ENCODE measurements at regions of chr20 and their contacts with region 1.

Region 1: DNA sequence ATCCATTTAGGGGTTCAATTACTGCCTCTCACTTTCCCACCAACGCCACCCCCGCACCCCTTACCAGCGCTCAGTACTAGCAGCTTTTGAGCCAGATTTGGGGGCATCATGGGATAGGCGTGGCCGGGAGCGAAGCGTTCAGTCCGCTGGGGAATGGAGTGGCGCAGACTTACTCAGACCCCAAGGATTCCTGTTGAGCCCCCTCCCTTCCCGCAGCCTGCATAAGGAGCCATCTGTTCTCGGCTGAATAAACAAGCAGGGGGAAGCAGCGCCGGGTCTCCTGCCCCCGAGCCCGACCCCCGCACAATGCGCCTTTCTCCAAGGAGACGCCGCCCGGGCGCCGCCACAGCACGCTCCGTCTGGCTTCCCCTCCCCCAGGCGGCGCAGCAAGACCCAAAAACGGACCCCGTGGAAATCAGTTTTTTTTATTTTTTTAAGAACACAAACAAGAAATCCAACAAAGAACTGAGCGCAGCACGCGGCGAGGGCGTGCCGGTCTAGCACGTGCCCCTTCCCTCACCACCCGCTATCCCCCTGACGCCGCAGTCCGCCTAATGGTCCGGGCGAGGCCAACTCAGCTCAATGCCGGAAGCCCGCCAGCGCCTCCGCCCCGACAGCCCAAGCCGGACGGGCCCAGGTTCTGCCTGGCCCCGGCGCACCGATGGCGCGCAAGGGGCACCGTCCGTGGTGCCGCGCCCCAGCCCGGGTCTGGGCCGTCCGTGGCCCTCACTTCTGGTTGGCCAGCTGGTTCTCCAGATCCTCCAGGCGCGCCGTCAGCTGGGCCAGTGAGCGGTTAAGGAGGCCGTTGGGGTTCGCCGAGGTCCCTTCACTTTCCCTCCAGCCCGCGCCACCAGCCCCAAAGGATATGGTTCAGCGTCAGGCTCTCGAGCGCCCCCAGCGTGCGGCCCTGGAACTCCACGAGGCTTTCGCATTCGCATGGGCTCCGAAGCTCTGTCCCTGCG is 13.3 kb upstream of the RBPJL start:
- DNase-seq: peak; percentile 82 to 95
- ATAC-seq: peak; percentile 78 to 91
- H3K4me3 ChIP-seq: peak overlapping the region; percentile 55
- H3K27ac ChIP-seq: peak overlapping the region; percentile 77 to 92
- H3K4me1 ChIP-seq: no peaks in the 10 kb centered on the region
- CTCF ChIP-seq: peak; percentile 76
- EP300 ChIP-seq: no peak
- POLR2A ChIP-seq: no peak
- RAD21 ChIP-seq: peak in 1 of 2 experiments; percentile 38; a peak in 2 of 5 replicates

Region 2: DNA sequence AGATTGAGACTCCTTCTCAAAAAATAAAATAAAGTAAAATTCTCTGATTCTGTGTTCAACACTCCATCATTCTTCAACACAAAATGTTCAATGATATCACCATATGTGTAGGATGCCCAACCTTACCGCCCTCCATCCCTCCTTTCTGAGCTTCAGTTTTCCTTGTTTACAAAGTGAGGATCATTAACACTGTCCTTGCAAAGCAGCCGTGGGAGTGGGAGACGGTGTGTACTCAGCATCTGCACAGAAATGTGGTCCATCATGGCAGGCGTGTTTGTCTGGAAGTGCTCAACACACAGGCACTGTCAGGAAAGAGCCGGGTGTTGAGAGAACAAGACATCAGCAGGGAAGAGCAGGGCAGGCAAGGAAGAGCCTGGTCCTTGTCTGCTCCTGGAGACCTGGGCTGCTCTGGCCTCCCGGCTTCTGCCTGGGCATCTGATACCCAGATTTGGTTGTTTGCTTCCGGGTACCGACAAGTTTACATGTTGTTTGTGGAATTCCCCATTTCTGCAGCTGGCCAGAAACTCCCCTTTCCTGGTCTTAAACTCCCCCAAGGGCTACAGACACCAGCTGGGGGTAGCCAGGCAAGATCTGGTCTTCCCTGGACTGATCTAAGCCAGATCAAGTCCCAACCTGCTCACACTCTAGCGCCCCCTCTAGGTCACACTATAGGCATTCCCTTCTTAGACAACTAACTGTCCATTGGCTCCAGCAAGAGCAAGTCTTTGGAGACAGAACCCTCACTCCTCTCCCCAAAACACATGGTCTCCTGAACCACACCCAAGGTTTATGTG is 844.4 kb before region 1 on chr20:
- CTCF ChIA-PET with region 1: no interaction called
- POLR2A ChIA-PET with region 1: no interaction called
- DNase-seq: peak in 1 of 2 experiments; percentile 61
- ATAC-seq: peak; percentile 44 to 67; a peak in 3 of 6 replicates
- H3K4me3 ChIP-seq: no peak overlapping the region
- H3K27ac ChIP-seq: no peak overlapping the region
- H3K4me1 ChIP-seq: no peaks in the 10 kb centered on the region
- CTCF ChIP-seq: peak; percentile 24; the same call in 1 of the 3 replicates
- EP300 ChIP-seq: no peak
- POLR2A ChIP-seq: no peak
- RAD21 ChIP-seq: no peak

Region 3: GRCh38 chr20:45011108-45011526 is 282.2 kb before region 1 on chr20:
- CTCF ChIA-PET with region 1: interaction called, 99 read pairs
- POLR2A ChIA-PET with region 1: no interaction called
- DNase-seq: peak; percentile 46 to 47
- ATAC-seq: peak; percentile 90 to 91
- H3K4me3 ChIP-seq: no peak overlapping the region
- H3K27ac ChIP-seq: no peak overlapping the region
- H3K4me1 ChIP-seq: peaks cover 12% of the 10 kb centered on the region
- CTCF ChIP-seq: peak; percentile 92
- EP300 ChIP-seq: no peak
- POLR2A ChIP-seq: no peak
- RAD21 ChIP-seq: peak; percentile 74 to 82

Region 4: DNA sequence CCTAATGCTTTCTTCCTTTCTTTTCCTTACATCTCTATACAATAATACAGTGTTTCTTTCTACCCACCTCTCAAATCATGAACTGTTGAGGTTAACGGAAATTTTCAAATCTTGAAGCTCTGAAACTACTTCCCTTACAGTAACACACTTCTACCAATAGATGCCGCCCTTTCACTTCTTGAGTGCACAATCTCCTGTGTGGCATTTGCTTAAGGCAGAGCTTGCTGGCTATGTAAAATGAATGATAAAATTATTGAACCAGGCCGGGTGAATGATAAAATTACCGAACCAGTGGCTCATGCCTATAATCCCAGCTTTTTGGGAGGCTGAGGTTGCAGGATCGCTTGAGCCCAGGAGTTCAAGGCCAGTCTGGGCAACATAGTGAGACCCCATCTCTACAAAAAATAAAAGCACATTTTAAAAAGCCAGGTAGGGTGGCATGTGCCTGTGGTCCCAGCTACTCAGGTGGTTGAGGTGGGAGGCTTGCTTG is 249.2 kb before region 1 on chr20:
- CTCF ChIA-PET with region 1: interaction called, 106 read pairs
- POLR2A ChIA-PET with region 1: no interaction called
- DNase-seq: peak; percentile 39 to 75
- ATAC-seq: peak; percentile 82 to 87
- H3K4me3 ChIP-seq: no peak overlapping the region
- H3K27ac ChIP-seq: no peak overlapping the region
- H3K4me1 ChIP-seq: peaks cover 24% of the 10 kb centered on the region
- CTCF ChIP-seq: peak; percentile 87
- EP300 ChIP-seq: no peak
- POLR2A ChIP-seq: no peak
- RAD21 ChIP-seq: peak; percentile 82 to 86

Region 5: GRCh38 chr20:45095753-45096371 is 197.5 kb before region 1 on chr20:
- CTCF ChIA-PET with region 1: interaction called, 103 read pairs
- POLR2A ChIA-PET with region 1: interaction called, 3 read pairs
- DNase-seq: peak; percentile 55 to 61
- ATAC-seq: peak; percentile 58 to 81; a peak in 5 of 6 replicates
- H3K4me3 ChIP-seq: no peak overlapping the region
- H3K27ac ChIP-seq: no peak overlapping the region
- H3K4me1 ChIP-seq: no peaks in the 10 kb centered on the region
- CTCF ChIP-seq: peak; percentile 90
- EP300 ChIP-seq: no peak
- POLR2A ChIP-seq: no peak
- RAD21 ChIP-seq: peak; percentile 74 to 83

Region 6: DNA sequence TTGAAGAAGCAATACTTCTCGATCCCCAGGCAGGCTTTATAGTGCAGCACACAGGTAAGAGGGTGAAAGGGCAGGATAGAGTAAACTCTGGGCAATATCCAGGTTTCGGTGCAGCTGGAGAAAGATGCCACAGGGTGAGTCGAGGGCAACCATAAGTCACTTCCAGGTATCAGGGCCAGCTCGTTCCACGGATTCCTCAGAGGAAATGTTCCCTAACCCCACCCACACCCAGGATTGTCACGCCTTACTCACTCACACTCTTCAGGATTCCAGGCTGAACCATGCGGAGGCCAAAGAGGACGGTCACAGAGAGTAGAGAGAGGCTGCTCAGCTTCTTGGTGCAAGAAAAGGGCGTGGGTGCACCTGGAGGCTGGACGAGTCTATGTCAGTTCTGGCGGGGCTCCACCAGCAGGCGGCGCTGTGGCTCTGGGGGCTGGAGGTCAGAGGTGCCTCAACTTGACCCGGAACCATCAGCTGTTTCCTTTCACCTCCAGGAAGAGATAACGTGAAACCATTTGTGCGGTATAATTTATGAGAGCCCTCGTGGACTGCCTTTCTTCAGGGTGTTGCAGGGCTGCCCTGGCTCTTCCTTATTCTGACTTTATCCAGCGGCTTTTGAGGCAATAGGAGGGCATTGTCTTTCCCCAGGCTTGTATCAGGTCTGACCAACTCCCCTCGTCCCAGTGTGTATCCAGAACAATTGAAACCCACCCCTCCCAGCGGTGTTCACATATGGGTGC is 154.6 kb before region 1 on chr20:
- CTCF ChIA-PET with region 1: interaction called, 30 read pairs
- POLR2A ChIA-PET with region 1: no interaction called
- DNase-seq: peak; percentile 31 to 59
- ATAC-seq: peak; percentile 70 to 84; a peak in 5 of 6 replicates
- H3K4me3 ChIP-seq: no peak overlapping the region
- H3K27ac ChIP-seq: no peak overlapping the region
- H3K4me1 ChIP-seq: no peaks in the 10 kb centered on the region
- CTCF ChIP-seq: peak; percentile 29; the same call in 2 of the 3 replicates
- EP300 ChIP-seq: no peak
- POLR2A ChIP-seq: no peak
- RAD21 ChIP-seq: peak; percentile 37 to 48; a peak in 3 of 5 replicates

Region 7: GRCh38 chr20:45268531-45268930 is 24.8 kb before region 1 on chr20:
- CTCF ChIA-PET with region 1: interaction called, 37 read pairs
- POLR2A ChIA-PET with region 1: no interaction called
- DNase-seq: no peak
- ATAC-seq: no peak
- H3K4me3 ChIP-seq: no peak overlapping the region
- H3K27ac ChIP-seq: no peak overlapping the region
- H3K4me1 ChIP-seq: no peaks in the 10 kb centered on the region
- CTCF ChIP-seq: no peak
- EP300 ChIP-seq: no peak
- POLR2A ChIP-seq: no peak
- RAD21 ChIP-seq: no peak

Region 8: DNA sequence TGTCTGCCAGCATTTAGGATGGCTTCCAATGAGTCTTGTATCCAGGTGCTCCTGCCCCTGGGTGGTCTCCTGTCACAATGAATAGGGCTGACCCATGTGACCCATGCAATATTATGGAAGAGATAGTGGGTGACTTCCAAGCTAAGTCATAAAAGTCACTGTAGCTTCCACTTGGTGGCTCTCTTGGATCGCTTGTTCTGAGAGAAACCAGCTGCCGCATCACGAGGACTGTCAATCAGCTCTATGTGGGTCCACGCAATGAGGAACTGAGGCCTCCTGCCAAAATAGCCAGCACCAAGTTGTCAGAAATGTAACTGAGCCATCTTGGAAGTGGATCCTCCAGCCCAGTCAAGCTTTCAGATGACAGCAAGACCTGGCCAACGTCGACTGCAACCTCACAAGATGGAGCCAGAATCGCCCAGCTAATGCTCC is 29.6 kb after region 1 on chr20:
- CTCF ChIA-PET with region 1: interaction called, 19 read pairs
- POLR2A ChIA-PET with region 1: no interaction called
- DNase-seq: peak in 1 of 2 experiments; percentile 63
- ATAC-seq: peak; percentile 61 to 71
- H3K4me3 ChIP-seq: no peak overlapping the region
- H3K27ac ChIP-seq: no peak overlapping the region
- H3K4me1 ChIP-seq: no peaks in the 10 kb centered on the region; the same call in 2 of the 3 replicates
- CTCF ChIP-seq: peak; percentile 59
- EP300 ChIP-seq: no peak
- POLR2A ChIP-seq: no peak
- RAD21 ChIP-seq: peak; percentile 81 to 82

Measured in A549 (cell line).